Activated CD4-positive, alpha-beta T cell treated with anti-CD3 and anti-CD28 coated beads for 36 hours (primary cell): ENCODE measurements at regions of chr2 and their contacts with region 1.

Region 1: DNA sequence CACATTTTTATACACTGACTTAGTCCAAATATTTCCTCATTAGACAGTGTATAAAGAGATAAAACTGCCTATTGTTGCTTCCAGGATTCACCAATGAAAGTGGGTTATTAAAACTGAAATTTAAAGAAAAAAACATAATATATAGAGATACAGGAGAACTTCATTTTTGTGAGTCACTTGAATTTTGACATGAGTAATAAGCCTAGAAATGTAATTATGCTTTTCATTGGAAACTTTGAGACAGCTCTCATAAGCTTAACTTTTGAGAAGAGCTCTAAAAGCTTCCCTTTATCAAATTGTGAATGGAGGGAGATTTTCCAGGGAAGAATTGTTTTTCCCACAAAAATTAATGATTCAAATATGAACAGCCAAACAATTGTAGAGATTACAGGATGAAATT is 14.1 kb downstream of the DYNC2LI1 start:
- DNase-seq: no peak
- ATAC-seq: peak; percentile 79
- H3K4me3 Mint-ChIP-seq: no peak overlapping the region
- H3K27ac Mint-ChIP-seq: peak overlapping the region; percentile 70
- H3K4me1 Mint-ChIP-seq: peaks cover 25% of the 10 kb centered on the region
- H3K27me3 Mint-ChIP-seq: no peaks in the 10 kb centered on the region

Region 2: GRCh38 chr2:43749583-43749982 is 38.3 kb before region 1 on chr2:
- CTCF ChIA-PET with region 1: no interaction called
- POLR2A ChIA-PET with region 1: no interaction called
- intact Hi-C with region 1: no loop called
- DNase-seq: no peak
- ATAC-seq: no peak
- H3K4me3 Mint-ChIP-seq: no peak overlapping the region
- H3K27ac Mint-ChIP-seq: no peak overlapping the region
- H3K4me1 Mint-ChIP-seq: no peaks in the 10 kb centered on the region
- H3K27me3 Mint-ChIP-seq: peaks cover 3% of the 10 kb centered on the region

Region 3: GRCh38 chr2:43934567-43934966 is 146.7 kb after region 1 on chr2:
- CTCF ChIA-PET with region 1: no interaction called
- POLR2A ChIA-PET with region 1: no interaction called
- intact Hi-C with region 1: loop called in 1 of 2 experiments (anchors 2 kb)
- DNase-seq: no peak
- ATAC-seq: peak; percentile 94
- H3K4me3 Mint-ChIP-seq: no peak overlapping the region
- H3K27ac Mint-ChIP-seq: peak overlapping the region; percentile 63
- H3K4me1 Mint-ChIP-seq: peaks cover 25% of the 10 kb centered on the region
- H3K27me3 Mint-ChIP-seq: no peaks in the 10 kb centered on the region